Naive thymus-derived CD4-positive, alpha-beta T cell (primary cell): ENCODE measurements at regions of chr19 and their contacts with region 1.

Region 1: GRCh38 chr19:10565567-10566407 is at the start of gene KRI1:
- DNase-seq: peak; percentile 97 to 100 (median 99)
- ATAC-seq: peak; percentile 75
- H3K4me3 ChIP-seq: peak within 1 kb of the TSS; percentile 84
- H3K4me3 Mint-ChIP-seq: peak within 1 kb of the TSS; percentile 92 to 100 (median 97)
- H3K27ac ChIP-seq: peak within 1 kb of the TSS; percentile 92
- H3K27ac Mint-ChIP-seq: peak within 1 kb of the TSS; percentile 94 to 99 (median 96)
- H3K4me1 ChIP-seq: peaks cover 26 to 28% of the 10 kb centered on the region in 2 donors
- H3K4me1 Mint-ChIP-seq: peaks cover 28 to 56% (median 45%) of the 10 kb centered on the region in 7 donors
- H3K27me3 ChIP-seq: no peaks in the 10 kb centered on the region
- H3K27me3 Mint-ChIP-seq: peaks cover 0 to 5% (median 0%) of the 10 kb centered on the region in 5 donors
- total RNA-seq, gene KRI1: 48.4 to 84.1 (median 60.4) TPM

Region 2: GRCh38 chr19:10332955-10333757 is 232.6 kb before region 1 on chr19 and contains the start of gene RAVER1:
- CTCF ChIA-PET with region 1: no interaction called
- POLR2A ChIA-PET with region 1: no interaction called
- intact Hi-C with region 1: loop called (anchors 1 to 5 kb)
- DNase-seq: peak; percentile 86 to 98 (median 97)
- ATAC-seq: peak; percentile 98
- H3K4me3 ChIP-seq: peak within 1 kb of the TSS; percentile 89
- H3K4me3 Mint-ChIP-seq: peak within 1 kb of the TSS; percentile 89 to 98 (median 93)
- H3K27ac ChIP-seq: peak within 1 kb of the TSS; percentile 91
- H3K27ac Mint-ChIP-seq: peak within 1 kb of the TSS; percentile 85 to 97 (median 95)
- H3K4me1 ChIP-seq: peaks cover 17 to 31% of the 10 kb centered on the region in 2 donors
- H3K4me1 Mint-ChIP-seq: peaks cover 6 to 48% (median 33%) of the 10 kb centered on the region in 7 donors
- H3K27me3 ChIP-seq: no peaks in the 10 kb centered on the region
- H3K27me3 Mint-ChIP-seq: no peaks in the 10 kb centered on the region
- total RNA-seq, gene RAVER1: 43.2 to 81.1 (median 50.2) TPM

Region 3: GRCh38 chr19:10543420-10544241 is 22.2 kb before region 1 on chr19 and contains the start of gene ATG4D:
- CTCF ChIA-PET with region 1: interaction called, 9 read pairs
- POLR2A ChIA-PET with region 1: interaction called, 126 read pairs
- intact Hi-C with region 1: loop called (anchors 1 kb)
- DNase-seq: peak; percentile 77 to 90 (median 84)
- ATAC-seq: peak; percentile 93
- H3K4me3 ChIP-seq: peak within 1 kb of the TSS; percentile 83
- H3K4me3 Mint-ChIP-seq: peak within 1 kb of the TSS; percentile 83 to 93 (median 88)
- H3K27ac ChIP-seq: peak within 1 kb of the TSS; percentile 96
- H3K27ac Mint-ChIP-seq: peak within 1 kb of the TSS; percentile 72 to 91 (median 87)
- H3K4me1 ChIP-seq: peaks cover 13 to 19% of the 10 kb centered on the region in 2 donors
- H3K4me1 Mint-ChIP-seq: peaks cover 8 to 27% (median 16%) of the 10 kb centered on the region in 7 donors
- H3K27me3 ChIP-seq: no peaks in the 10 kb centered on the region
- H3K27me3 Mint-ChIP-seq: peaks cover 4 to 28% (median 5%) of the 10 kb centered on the region in 5 donors
- total RNA-seq, gene ATG4D: 41.7 to 70.3 (median 56.7) TPM

Region 4: GRCh38 chr19:10695401-10696398 is 129.9 kb after region 1 on chr19:
- CTCF ChIA-PET with region 1: interaction called, 3 read pairs
- POLR2A ChIA-PET with region 1: interaction called, 3 read pairs
- intact Hi-C with region 1: loop called (anchors 2 kb)
- DNase-seq: peak; percentile 79 to 90 (median 85)
- ATAC-seq: peak; percentile 99
- H3K4me3 ChIP-seq: peak overlapping the region; percentile 36
- H3K4me3 Mint-ChIP-seq: peak overlapping the region; percentile 81 to 89 (median 86)
- H3K27ac ChIP-seq: no peak overlapping the region
- H3K27ac Mint-ChIP-seq: peak overlapping the region in 8 of 9 donors; percentile 9 to 88 (median 56)
- H3K4me1 ChIP-seq: peaks cover 4 to 10% of the 10 kb centered on the region in 2 donors
- H3K4me1 Mint-ChIP-seq: peaks cover 12 to 25% (median 21%) of the 10 kb centered on the region in 7 donors
- H3K27me3 ChIP-seq: no peaks in the 10 kb centered on the region
- H3K27me3 Mint-ChIP-seq: peaks cover 0 to 11% (median 0%) of the 10 kb centered on the region in 5 donors

Region 5: GRCh38 chr19:10766671-10767201 is 200.9 kb after region 1 on chr19:
- CTCF ChIA-PET with region 1: no interaction called
- POLR2A ChIA-PET with region 1: no interaction called
- intact Hi-C with region 1: no loop called
- DNase-seq: no peak
- ATAC-seq: no peak
- H3K4me3 ChIP-seq: no peak overlapping the region
- H3K4me3 Mint-ChIP-seq: no peak overlapping the region
- H3K27ac ChIP-seq: no peak overlapping the region
- H3K27ac Mint-ChIP-seq: peak overlapping the region in 8 of 9 donors; percentile 34 to 87 (median 48)
- H3K4me1 ChIP-seq: peaks cover 27 to 30% of the 10 kb centered on the region in 2 donors
- H3K4me1 Mint-ChIP-seq: peaks cover 42 to 69% (median 63%) of the 10 kb centered on the region in 7 donors
- H3K27me3 ChIP-seq: no peaks in the 10 kb centered on the region
- H3K27me3 Mint-ChIP-seq: no peaks in the 10 kb centered on the region

Region 6: GRCh38 chr19:10870955-10871603 is 305.3 kb after region 1 on chr19 and contains the start of gene CARM1:
- CTCF ChIA-PET with region 1: no interaction called
- POLR2A ChIA-PET with region 1: no interaction called
- intact Hi-C with region 1: loop called (anchors 1 to 2 kb)
- DNase-seq: peak; percentile 99 to 100 (median 99)
- ATAC-seq: peak; percentile 92
- H3K4me3 ChIP-seq: peak within 1 kb of the TSS; percentile 67
- H3K4me3 Mint-ChIP-seq: peak within 1 kb of the TSS; percentile 79 to 91 (median 86)
- H3K27ac ChIP-seq: peak within 1 kb of the TSS; percentile 74
- H3K27ac Mint-ChIP-seq: peak within 1 kb of the TSS; percentile 74 to 96 (median 88)
- H3K4me1 ChIP-seq: peaks cover 10 to 14% of the 10 kb centered on the region in 2 donors
- H3K4me1 Mint-ChIP-seq: peaks cover 5 to 33% (median 25%) of the 10 kb centered on the region in 7 donors
- H3K27me3 ChIP-seq: no peaks in the 10 kb centered on the region
- H3K27me3 Mint-ChIP-seq: no peaks in the 10 kb centered on the region
- total RNA-seq, gene CARM1: 21.3 to 43.1 (median 27.2) TPM

Region 7: DNA sequence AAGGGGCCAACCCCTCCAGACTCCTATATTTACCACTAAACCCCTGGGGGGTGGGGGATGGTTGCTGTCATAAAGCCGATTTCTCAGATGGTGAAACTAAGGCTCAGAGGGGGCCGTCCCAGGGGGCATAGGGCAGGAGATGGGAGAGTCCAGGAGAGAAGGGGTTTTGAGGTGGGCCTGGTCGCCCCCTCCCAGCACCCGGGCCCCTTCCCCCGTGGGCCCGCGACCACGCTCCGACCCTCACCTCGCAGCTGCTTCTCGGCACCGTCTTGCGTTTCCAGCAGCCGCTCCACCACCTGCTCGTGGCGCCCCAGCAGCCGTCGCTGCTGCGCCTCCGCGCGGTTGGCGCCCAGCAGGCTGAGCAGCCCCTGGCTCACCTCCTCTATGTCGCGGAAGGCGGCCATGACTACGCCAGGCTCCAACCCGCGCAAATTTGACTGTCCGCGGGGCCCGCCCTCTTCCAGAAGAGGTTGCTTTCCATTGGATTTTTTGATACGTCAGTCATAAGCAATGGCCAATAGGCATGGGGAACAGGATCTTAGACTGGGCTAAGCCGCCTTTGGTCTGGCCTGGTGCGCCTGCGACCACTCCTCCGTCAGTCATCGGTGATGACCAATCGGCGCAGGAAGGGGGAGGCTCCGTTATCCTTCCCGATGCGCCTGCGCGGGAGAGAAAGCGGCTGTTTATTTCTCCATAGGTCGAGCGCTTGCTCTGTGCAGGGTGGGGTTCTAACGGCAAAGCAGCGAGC is 589.8 kb after region 1 on chr19 and contains the start of gene SPC24:
- CTCF ChIA-PET with region 1: no interaction called
- POLR2A ChIA-PET with region 1: no interaction called
- intact Hi-C with region 1: loop called in 1 of 2 experiments (anchors 5 kb)
- DNase-seq: peak; percentile 70 to 93 (median 90)
- ATAC-seq: peak; percentile 98
- H3K4me3 ChIP-seq: peak within 1 kb of the TSS; percentile 71
- H3K4me3 Mint-ChIP-seq: peak within 1 kb of the TSS; percentile 79 to 94 (median 89)
- H3K27ac ChIP-seq: peak within 1 kb of the TSS; percentile 16
- H3K27ac Mint-ChIP-seq: peak within 1 kb of the TSS; percentile 54 to 92 (median 83)
- H3K4me1 ChIP-seq: peaks cover 6 to 15% of the 10 kb centered on the region in 2 donors
- H3K4me1 Mint-ChIP-seq: peaks cover 7 to 30% (median 15%) of the 10 kb centered on the region in 7 donors
- H3K27me3 ChIP-seq: no peaks in the 10 kb centered on the region
- H3K27me3 Mint-ChIP-seq: no peaks in the 10 kb centered on the region
- total RNA-seq, gene SPC24: 0.56 to 45.4 (median 1.9) TPM